Transverse colon (tissue), 4 donors: ENCODE measurements at regions of chr3 and their contacts with region 1.

Region 1: DNA sequence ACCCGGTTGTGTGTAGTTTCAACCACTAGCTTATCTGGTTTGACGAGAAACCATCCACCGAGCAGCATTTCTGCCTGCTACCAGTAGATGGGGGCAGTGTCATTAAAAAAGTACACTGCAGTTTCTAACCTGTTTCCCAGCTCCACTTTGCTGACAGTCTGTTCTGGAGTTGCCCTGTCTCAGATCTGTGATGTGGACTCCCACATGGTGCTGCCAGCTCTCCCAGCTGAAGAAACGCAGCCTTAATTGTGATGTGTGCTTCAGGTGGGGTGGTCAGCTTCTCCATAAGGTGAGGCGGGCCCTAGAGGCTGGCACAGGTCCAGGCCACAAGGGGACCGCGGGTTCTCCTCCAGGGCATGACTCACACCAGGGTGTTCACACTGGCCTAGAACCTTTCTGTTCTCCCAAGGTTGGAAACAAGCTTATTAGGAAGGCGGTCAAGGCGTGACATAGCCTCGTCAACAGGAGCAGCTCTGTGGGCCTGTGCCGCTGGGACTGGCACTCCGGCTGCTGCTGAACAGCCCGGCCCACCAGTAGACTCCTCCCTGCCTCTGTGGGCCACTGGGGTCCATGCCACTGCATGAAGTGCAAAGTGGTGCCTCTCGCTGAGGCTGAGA is 2.9 kb upstream of the FAM43A start:
- DNase-seq: peak; percentile 79
- H3K4me3 ChIP-seq: no peak overlapping the region
- H3K27ac ChIP-seq: peak overlapping the region in 3 of 4 donors; percentile 26 to 52 (median 37)
- H3K4me1 ChIP-seq: peaks cover 0 to 32% (median 23%) of the 10 kb centered on the region in 4 donors
- H3K27me3 ChIP-seq: no peaks in the 10 kb centered on the region
- CTCF ChIP-seq: peak; percentile 70 to 94 (median 82)
- EP300 ChIP-seq: no peak
- POLR2A ChIP-seq: no peak

Region 2: DNA sequence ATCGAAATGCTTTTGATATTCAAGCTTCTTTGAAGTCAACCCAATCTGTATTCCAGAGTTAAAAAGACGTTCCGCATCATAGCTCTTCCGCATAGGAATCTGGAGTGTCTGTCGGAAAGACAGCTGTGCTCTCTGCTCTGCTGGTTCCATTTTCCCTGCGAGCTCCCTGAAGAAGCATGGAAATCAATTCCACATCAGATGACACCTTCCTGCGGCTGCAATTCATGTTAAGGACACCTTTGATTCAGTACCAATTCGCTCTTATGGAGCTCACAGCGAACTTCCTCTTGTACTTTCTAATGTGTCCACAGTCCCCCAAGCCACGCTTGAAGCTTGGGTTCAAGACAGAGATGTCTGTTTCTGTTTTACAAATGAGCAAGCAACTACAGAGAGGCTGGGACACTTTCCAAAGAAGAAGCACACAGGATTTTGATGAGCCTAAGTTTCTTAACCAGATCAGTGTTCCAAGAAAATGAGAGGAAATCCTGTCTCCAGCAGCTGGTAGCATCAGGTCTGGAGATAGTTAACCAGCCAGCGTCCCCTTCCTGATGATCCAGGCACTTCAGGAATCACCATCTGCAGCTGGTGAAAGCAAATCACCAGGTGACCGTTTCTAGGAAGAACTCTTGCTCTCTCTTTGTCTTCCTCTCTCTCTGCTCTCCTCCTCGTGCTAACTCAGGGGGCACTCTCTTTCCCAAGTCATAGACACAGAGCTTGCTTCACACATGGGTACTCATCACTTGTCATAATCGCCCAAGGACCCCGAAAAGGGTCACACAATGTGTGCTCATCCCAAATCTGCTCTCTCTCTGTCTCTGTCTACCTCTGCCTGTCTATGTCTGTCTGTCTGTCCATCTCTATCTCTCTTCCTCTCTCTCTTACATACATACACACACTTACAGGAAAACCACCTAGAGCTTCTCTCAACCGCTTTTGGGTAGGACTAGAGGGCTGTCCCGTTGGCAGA is 284.6 kb after region 1 on chr3:
- in situ Hi-C with region 1: loop called in 1 of 4 experiments (anchors 25 kb)
- intact Hi-C with region 1: no loop called
- DNase-seq: no peak
- H3K4me3 ChIP-seq: no peak overlapping the region
- H3K27ac ChIP-seq: no peak overlapping the region
- H3K4me1 ChIP-seq: no peaks in the 10 kb centered on the region
- H3K27me3 ChIP-seq: no peaks in the 10 kb centered on the region
- CTCF ChIP-seq: no peak
- EP300 ChIP-seq: no peak
- POLR2A ChIP-seq: no peak

Region 3: GRCh38 chr3:194985031-194985578 is 302.3 kb after region 1 on chr3:
- in situ Hi-C with region 1: loop called in 2 of 4 experiments (anchors 25 kb)
- intact Hi-C with region 1: no loop called
- DNase-seq: peak; percentile 79
- H3K4me3 ChIP-seq: peak overlapping the region in 2 of 4 donors; percentile 17 to 21
- H3K27ac ChIP-seq: no peak overlapping the region
- H3K4me1 ChIP-seq: peaks cover 4 to 13% (median 11%) of the 10 kb centered on the region in 4 donors
- H3K27me3 ChIP-seq: no peaks in the 10 kb centered on the region
- CTCF ChIP-seq: peak; percentile 32 to 68 (median 41)
- EP300 ChIP-seq: no peak
- POLR2A ChIP-seq: no peak

Region 4: GRCh38 chr3:195106418-195106906 is 423.7 kb after region 1 on chr3:
- in situ Hi-C with region 1: loop called (anchors 10 kb)
- intact Hi-C with region 1: loop called (anchors 2 kb)
- DNase-seq: peak; percentile 65
- H3K4me3 ChIP-seq: peak overlapping the region in 1 of 4 donors; percentile 29
- H3K27ac ChIP-seq: no peak overlapping the region
- H3K4me1 ChIP-seq: peaks cover 0 to 28% (median 9%) of the 10 kb centered on the region in 4 donors
- H3K27me3 ChIP-seq: no peaks in the 10 kb centered on the region
- CTCF ChIP-seq: peak; percentile 97 to 100 (median 100)
- EP300 ChIP-seq: no peak
- POLR2A ChIP-seq: no peak

Region 5: DNA sequence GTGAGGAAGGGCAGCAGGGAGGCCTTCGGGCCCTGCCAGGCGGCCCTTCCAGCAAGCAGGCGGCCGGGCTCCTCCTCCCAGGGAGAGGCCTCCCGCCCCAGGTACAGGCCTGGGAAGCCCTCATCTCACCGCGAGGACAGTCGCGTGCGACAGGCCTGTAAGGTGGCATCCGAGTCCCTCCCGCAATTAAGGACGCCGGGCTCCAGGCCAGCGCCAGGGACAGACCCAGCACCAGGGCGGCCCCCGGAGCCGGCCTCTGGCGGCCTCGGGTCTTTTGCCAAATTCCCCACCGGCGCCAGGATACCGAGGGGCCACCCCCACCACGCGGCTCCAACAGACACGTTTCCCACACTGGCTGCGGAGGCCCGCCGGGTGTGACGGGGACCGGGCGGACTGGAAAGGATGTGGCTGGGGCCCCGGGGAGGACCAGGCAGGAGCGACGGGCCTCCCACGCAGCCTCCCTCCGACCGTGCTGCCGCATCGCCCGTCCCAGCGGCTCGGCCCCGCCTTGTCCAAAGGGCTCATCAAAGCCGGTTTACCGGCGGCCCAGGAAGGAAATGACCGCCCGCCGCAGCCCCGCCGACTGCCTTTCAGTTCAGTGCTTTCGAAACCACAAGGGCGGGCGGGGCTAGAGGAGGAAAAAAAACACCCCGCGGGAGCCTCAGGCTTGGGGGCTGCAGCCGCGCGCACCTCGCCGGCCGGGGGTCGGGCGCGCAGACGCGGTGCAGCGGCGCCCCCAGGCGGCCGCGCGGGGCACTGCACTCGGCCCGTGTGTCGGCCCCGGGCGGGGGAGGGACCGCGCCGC is 576.9 kb after region 1 on chr3:
- in situ Hi-C with region 1: loop called (anchors 10 kb)
- intact Hi-C with region 1: loop called (anchors 5 kb)
- DNase-seq: peak; percentile 93
- H3K4me3 ChIP-seq: peak overlapping the region; percentile 31 to 76 (median 64)
- H3K27ac ChIP-seq: peak overlapping the region; percentile 88 to 95 (median 92)
- H3K4me1 ChIP-seq: peaks cover 21 to 32% (median 26%) of the 10 kb centered on the region in 4 donors
- H3K27me3 ChIP-seq: no peaks in the 10 kb centered on the region
- CTCF ChIP-seq: peak; percentile 21 to 68 (median 56)
- EP300 ChIP-seq: no peak
- POLR2A ChIP-seq: peak; percentile 52

Region 6: GRCh38 chr3:195271116-195271858 is 588.5 kb after region 1 on chr3 and contains the start of gene XXYLT1:
- in situ Hi-C with region 1: loop called in 3 of 4 experiments (anchors 10 kb)
- intact Hi-C with region 1: loop called (anchors 5 kb)
- DNase-seq: peak; percentile 92
- H3K4me3 ChIP-seq: peak within 1 kb of the TSS; percentile 78 to 95 (median 92)
- H3K27ac ChIP-seq: peak within 1 kb of the TSS; percentile 91 to 98 (median 93)
- H3K4me1 ChIP-seq: peaks cover 14 to 30% (median 21%) of the 10 kb centered on the region in 4 donors
- H3K27me3 ChIP-seq: no peaks in the 10 kb centered on the region
- CTCF ChIP-seq: peak; percentile 91 to 98 (median 96)
- EP300 ChIP-seq: no peak
- POLR2A ChIP-seq: no peak
- total RNA-seq, gene XXYLT1: 3.0 to 10.0 (median 5.9) TPM

Region 7: GRCh38 chr3:195542698-195543499 is 860.1 kb after region 1 on chr3 and contains the start of gene PPP1R2:
- in situ Hi-C with region 1: loop called in 2 of 4 experiments (anchors 25 kb)
- intact Hi-C with region 1: loop called (anchors 10 kb)
- DNase-seq: peak; percentile 95
- H3K4me3 ChIP-seq: peak within 1 kb of the TSS; percentile 73 to 94 (median 82)
- H3K27ac ChIP-seq: peak within 1 kb of the TSS; percentile 94 to 98 (median 96)
- H3K4me1 ChIP-seq: peaks cover 11 to 68% (median 41%) of the 10 kb centered on the region in 4 donors
- H3K27me3 ChIP-seq: no peaks in the 10 kb centered on the region
- CTCF ChIP-seq: no peak
- EP300 ChIP-seq: no peak
- POLR2A ChIP-seq: peak; percentile 97
- total RNA-seq, gene PPP1R2: 50.7 to 143 (median 59.4) TPM